MCF 10A (cell line): ENCODE measurements at regions of chr9 and their contacts with region 1.

Region 1: DNA sequence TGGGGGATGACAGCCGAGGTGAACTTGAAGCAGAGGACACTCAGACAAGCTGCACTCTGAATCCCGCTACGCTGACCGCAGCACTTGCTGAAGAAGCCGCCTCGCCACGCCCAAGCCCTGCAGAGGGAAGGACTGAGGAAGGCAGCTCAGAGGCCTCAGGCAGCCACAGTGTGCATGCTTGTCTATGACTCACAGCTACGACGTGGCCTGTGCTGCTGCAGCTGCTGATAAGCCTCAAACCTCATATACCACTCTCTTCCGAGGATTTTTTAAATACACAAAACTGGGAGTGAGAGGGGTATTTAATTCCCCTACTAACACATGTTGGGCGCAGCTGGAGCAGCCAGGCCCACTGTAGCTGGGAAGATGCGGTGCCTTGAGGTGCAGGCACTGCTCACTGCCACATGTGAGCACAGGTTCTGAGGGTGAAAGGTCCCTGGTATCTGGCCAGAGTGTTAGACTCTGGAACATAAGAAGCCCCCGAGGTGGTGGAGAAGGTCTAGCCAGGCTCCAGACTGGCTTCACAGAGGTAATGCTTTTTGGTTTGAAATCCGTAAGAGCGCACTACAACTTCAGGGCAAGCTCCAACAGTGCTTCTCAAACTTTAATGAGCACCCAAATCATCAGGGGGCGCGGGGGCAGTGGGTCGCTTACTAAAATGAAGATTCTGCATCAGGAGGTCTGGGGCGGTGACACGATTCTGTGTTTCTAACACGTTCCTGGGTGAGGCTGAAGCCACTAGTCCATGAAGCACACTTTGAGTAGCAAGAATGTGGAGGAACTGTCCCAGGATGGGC is 196.8 kb downstream of the AUH start:
- DNase-seq: peak; percentile 94
- H3K4me3 Mint-ChIP-seq: peak overlapping the region; percentile 6
- H3K27ac Mint-ChIP-seq: peak overlapping the region; percentile 57
- H3K4me1 Mint-ChIP-seq: peaks cover 30% of the 10 kb centered on the region
- H3K27me3 Mint-ChIP-seq: no peaks in the 10 kb centered on the region
- CTCF ChIP-seq: no peak

Region 2: GRCh38 chr9:91150998-91151717 is 13.8 kb before region 1 on chr9:
- CTCF ChIA-PET with region 1: interaction called, 8 read pairs
- POLR2A ChIA-PET with region 1: interaction called, 16 read pairs
- intact Hi-C with region 1: no loop called
- DNase-seq: peak; percentile 86
- H3K4me3 Mint-ChIP-seq: peak overlapping the region; percentile 21
- H3K27ac Mint-ChIP-seq: peak overlapping the region; percentile 96
- H3K4me1 Mint-ChIP-seq: peaks cover 43% of the 10 kb centered on the region
- H3K27me3 Mint-ChIP-seq: no peaks in the 10 kb centered on the region
- CTCF ChIP-seq: no peak

Region 3: GRCh38 chr9:91214086-91214485 is 49.2 kb after region 1 on chr9:
- CTCF ChIA-PET with region 1: no interaction called
- POLR2A ChIA-PET with region 1: no interaction called
- intact Hi-C with region 1: no loop called
- DNase-seq: no peak
- H3K4me3 Mint-ChIP-seq: no peak overlapping the region
- H3K27ac Mint-ChIP-seq: no peak overlapping the region
- H3K4me1 Mint-ChIP-seq: peaks cover 6% of the 10 kb centered on the region
- H3K27me3 Mint-ChIP-seq: no peaks in the 10 kb centered on the region
- CTCF ChIP-seq: no peak

Region 4: GRCh38 chr9:91320299-91320698 is 155.4 kb after region 1 on chr9:
- CTCF ChIA-PET with region 1: no interaction called
- POLR2A ChIA-PET with region 1: no interaction called
- intact Hi-C with region 1: no loop called
- DNase-seq: no peak
- H3K4me3 Mint-ChIP-seq: no peak overlapping the region
- H3K27ac Mint-ChIP-seq: no peak overlapping the region
- H3K4me1 Mint-ChIP-seq: no peaks in the 10 kb centered on the region
- H3K27me3 Mint-ChIP-seq: no peaks in the 10 kb centered on the region
- CTCF ChIP-seq: no peak

Region 5: DNA sequence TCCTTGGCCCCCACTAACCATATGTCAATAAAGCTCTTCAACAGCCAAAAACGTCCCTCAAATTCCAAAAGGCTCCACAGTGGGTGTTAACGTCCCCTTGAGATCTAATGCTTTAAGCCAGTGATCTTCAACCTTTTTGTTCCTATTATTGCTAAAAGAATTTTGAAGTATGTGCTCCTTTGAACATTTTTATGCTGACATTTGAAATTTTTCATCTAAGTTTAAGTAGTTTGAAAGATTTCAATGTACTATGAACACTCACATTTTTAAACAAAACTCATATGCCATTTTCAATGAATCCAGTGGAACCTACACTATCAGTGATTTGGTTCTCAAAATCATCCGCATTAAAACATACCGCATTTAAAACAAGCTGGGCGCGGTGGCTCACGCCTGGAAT is 166.9 kb after region 1 on chr9:
- CTCF ChIA-PET with region 1: no interaction called
- POLR2A ChIA-PET with region 1: no interaction called
- intact Hi-C with region 1: no loop called
- DNase-seq: no peak
- H3K4me3 Mint-ChIP-seq: no peak overlapping the region
- H3K27ac Mint-ChIP-seq: no peak overlapping the region
- H3K4me1 Mint-ChIP-seq: peaks cover 5% of the 10 kb centered on the region
- H3K27me3 Mint-ChIP-seq: no peaks in the 10 kb centered on the region
- CTCF ChIP-seq: no peak